IMR-90 (cell line): ENCODE measurements at regions of chr7 and their contacts with region 1.

Region 1: GRCh38 chr7:55255496-55256435 is 109.4 kb upstream of the LANCL2 start:
- DNase-seq: peak; percentile 68
- ATAC-seq: peak; percentile 89
- H3K4me3 ChIP-seq: peak overlapping the region; percentile 44
- H3K27ac ChIP-seq: peak overlapping the region; percentile 19; the same call in 1 of the 2 replicates
- H3K4me1 ChIP-seq: peaks cover 5% of the 10 kb centered on the region; the same call in 1 of the 2 replicates
- H3K27me3 ChIP-seq: peaks cover 3% of the 10 kb centered on the region
- CTCF ChIP-seq: peak; percentile 95
- POLR2A ChIP-seq: no peak
- RAD21 ChIP-seq: peak; percentile 94

Region 2: DNA sequence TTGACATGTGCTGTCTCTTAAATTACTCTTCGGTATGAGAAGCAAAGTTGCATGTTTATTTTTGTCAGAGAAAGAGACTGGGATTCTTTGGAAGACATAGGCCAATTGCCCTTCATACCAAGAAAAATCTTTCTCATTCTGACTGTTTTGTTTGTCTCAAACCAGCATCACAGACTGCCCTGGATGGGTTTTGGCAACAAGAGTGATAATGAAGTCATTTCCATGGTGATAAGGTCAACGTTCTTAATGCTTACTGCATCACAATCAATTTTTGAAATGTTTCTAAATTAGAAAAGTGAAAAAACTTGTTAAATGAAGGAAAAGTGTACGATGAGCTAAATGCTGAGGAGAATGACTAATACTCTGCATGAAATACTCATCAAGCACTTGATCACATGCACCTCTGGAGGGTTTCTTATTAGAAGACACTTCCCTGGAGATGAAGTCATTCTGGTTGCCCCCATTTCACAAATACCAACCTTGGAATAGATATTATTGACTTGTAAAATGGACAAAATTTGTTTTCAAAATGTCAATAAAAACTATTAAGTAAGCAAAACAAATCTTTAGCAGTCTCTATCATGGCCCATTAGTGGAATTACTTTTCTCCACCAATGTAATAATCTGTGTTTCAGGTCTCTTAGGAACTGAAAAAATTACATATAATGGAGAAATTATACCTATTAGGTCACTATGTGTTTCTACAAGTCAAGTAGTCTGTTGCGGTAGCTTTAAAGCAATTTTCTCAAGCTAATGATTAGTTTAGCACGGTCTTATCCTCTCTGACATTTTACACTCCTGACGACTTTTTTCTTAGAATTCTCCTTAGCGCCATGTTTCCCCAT is 476.8 kb before region 1 on chr7:
- CTCF ChIA-PET with region 1: interaction called, 42 read pairs
- POLR2A ChIA-PET with region 1: no interaction called
- dilution Hi-C with region 1: no loop called
- in situ Hi-C with region 1: loop called (anchors 5 kb)
- intact Hi-C with region 1: loop called (anchors 1 kb)
- DNase-seq: peak; percentile 47
- ATAC-seq: no peak
- H3K4me3 ChIP-seq: no peak overlapping the region
- H3K27ac ChIP-seq: no peak overlapping the region
- H3K4me1 ChIP-seq: no peaks in the 10 kb centered on the region
- H3K27me3 ChIP-seq: no peaks in the 10 kb centered on the region
- CTCF ChIP-seq: no peak
- POLR2A ChIP-seq: no peak
- RAD21 ChIP-seq: no peak

Region 3: DNA sequence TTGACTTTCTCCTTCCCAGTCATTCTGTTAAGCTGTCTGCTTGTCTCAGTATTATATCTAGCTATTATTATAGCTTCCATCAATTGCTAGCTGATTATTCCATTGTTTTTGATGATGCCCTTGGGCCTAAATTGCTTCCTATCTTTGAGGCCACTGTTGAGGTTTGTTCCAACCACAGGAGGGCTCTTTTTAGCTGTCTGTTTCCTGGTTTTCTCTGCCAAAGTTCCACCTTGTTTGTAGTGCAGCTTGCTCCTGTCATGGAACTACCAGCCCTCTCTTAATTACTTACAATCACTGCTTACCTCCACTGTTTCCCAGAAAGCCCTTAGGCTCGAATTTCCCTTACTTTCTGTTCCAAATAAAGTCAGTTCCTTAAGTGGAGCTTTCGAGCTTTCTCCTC is 378.1 kb before region 1 on chr7:
- CTCF ChIA-PET with region 1: interaction called, 11 read pairs
- POLR2A ChIA-PET with region 1: interaction called, 3 read pairs
- dilution Hi-C with region 1: no loop called
- in situ Hi-C with region 1: no loop called
- intact Hi-C with region 1: no loop called
- DNase-seq: no peak
- ATAC-seq: no peak
- H3K4me3 ChIP-seq: no peak overlapping the region
- H3K27ac ChIP-seq: no peak overlapping the region
- H3K4me1 ChIP-seq: peaks cover 1% of the 10 kb centered on the region; the same call in 1 of the 2 replicates
- H3K27me3 ChIP-seq: no peaks in the 10 kb centered on the region
- CTCF ChIP-seq: no peak
- POLR2A ChIP-seq: no peak
- RAD21 ChIP-seq: no peak

Region 4: GRCh38 chr7:55065079-55065478 is 190.7 kb before region 1 on chr7:
- CTCF ChIA-PET with region 1: interaction called, 4 read pairs
- POLR2A ChIA-PET with region 1: no interaction called
- dilution Hi-C with region 1: no loop called
- in situ Hi-C with region 1: no loop called
- intact Hi-C with region 1: loop called (anchors 5 kb)
- DNase-seq: peak; percentile 99
- ATAC-seq: peak; percentile 76
- H3K4me3 ChIP-seq: no peak overlapping the region
- H3K27ac ChIP-seq: peak overlapping the region; percentile 93; the same call in 1 of the 2 replicates
- H3K4me1 ChIP-seq: peaks cover 45% of the 10 kb centered on the region
- H3K27me3 ChIP-seq: no peaks in the 10 kb centered on the region
- CTCF ChIP-seq: no peak
- POLR2A ChIP-seq: no peak; the same call in 1 of the 2 replicates
- RAD21 ChIP-seq: peak; percentile 33; the same call in 1 of the 2 replicates

Region 5: GRCh38 chr7:55192718-55193117 is 63.0 kb before region 1 on chr7:
- CTCF ChIA-PET with region 1: interaction called, 7 read pairs
- POLR2A ChIA-PET with region 1: no interaction called
- dilution Hi-C with region 1: no loop called
- in situ Hi-C with region 1: no loop called
- intact Hi-C with region 1: loop called (anchors 5 kb)
- DNase-seq: peak; percentile 88
- ATAC-seq: peak; percentile 76
- H3K4me3 ChIP-seq: no peak overlapping the region
- H3K27ac ChIP-seq: peak overlapping the region; percentile 93
- H3K4me1 ChIP-seq: peaks cover 33% of the 10 kb centered on the region
- H3K27me3 ChIP-seq: no peaks in the 10 kb centered on the region
- CTCF ChIP-seq: no peak
- POLR2A ChIP-seq: no peak
- RAD21 ChIP-seq: no peak

Region 6: GRCh38 chr7:55271069-55271626 is 15.4 kb after region 1 on chr7:
- CTCF ChIA-PET with region 1: interaction called, 16 read pairs
- POLR2A ChIA-PET with region 1: no interaction called
- dilution Hi-C with region 1: no loop called
- in situ Hi-C with region 1: no loop called
- intact Hi-C with region 1: no loop called
- DNase-seq: peak; percentile 26
- ATAC-seq: peak; percentile 66
- H3K4me3 ChIP-seq: no peak overlapping the region
- H3K27ac ChIP-seq: no peak overlapping the region
- H3K4me1 ChIP-seq: peaks cover 2% of the 10 kb centered on the region; the same call in 1 of the 2 replicates
- H3K27me3 ChIP-seq: peaks cover 60% of the 10 kb centered on the region
- CTCF ChIP-seq: peak; percentile 63
- POLR2A ChIP-seq: no peak
- RAD21 ChIP-seq: peak; percentile 68

Region 7: DNA sequence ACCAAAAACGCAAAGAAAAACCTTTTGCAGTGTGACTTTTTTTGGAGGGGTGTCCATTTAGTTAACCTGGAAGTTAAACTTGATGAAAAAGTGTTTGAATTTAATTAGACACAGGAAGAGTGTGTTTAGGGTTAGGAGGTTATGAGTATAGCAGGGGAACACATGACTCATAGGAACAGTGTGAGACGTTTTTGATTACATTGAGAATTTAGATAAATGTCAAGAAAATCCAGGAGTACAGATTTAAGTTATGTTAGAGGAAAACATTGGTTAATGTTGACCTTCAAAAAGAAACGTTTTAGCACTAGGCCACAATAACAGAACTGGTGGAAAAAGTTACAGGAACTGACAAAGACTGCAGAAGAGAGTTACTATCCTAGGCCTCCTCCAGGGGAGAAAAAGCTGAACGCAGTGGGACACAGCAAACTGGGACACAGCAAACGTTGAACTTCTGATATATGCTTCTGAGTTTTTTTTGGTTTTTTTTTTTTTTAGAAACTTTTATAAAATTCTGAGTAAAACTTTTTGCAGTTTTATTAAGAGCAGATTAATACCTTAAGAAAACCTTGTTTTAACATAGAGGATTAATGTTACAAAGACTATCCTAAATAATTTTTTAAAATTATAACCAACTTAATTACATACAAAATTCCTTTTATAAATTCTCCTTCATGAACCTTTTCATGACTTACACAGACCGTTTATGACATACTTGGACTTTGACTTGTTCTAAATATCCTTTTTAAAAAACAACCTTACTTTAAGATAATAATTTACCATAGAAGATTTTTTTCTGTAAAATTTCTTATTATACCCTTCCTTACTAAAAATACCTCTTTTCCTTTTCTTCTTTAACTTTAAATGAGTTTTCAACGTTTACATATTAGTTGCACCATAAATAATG is 131.5 kb after region 1 on chr7:
- CTCF ChIA-PET with region 1: no interaction called
- POLR2A ChIA-PET with region 1: no interaction called
- dilution Hi-C with region 1: no loop called
- in situ Hi-C with region 1: no loop called
- intact Hi-C with region 1: no loop called
- DNase-seq: peak; percentile 19
- ATAC-seq: no peak
- H3K4me3 ChIP-seq: no peak overlapping the region
- H3K27ac ChIP-seq: no peak overlapping the region
- H3K4me1 ChIP-seq: no peaks in the 10 kb centered on the region
- H3K27me3 ChIP-seq: no peaks in the 10 kb centered on the region
- CTCF ChIP-seq: no peak
- POLR2A ChIP-seq: no peak
- RAD21 ChIP-seq: no peak